ENCODE measurements at regions of chr2 and their contacts with region 1.

Region 1: GRCh38 chr2:33275689-33276444 is 200.6 kb upstream of the RASGRP3 start:
- DNase-seq: no peak
- H3K4me3 ChIP-seq: no peak overlapping the region
- H3K27ac ChIP-seq: peak overlapping the region; percentile 80
- H3K4me1 ChIP-seq: peaks cover 10% of the 10 kb centered on the region
- H3K27me3 ChIP-seq: no peaks in the 10 kb centered on the region
- CTCF ChIP-seq: no peak
- POLR2A ChIP-seq: no peak

Region 2: DNA sequence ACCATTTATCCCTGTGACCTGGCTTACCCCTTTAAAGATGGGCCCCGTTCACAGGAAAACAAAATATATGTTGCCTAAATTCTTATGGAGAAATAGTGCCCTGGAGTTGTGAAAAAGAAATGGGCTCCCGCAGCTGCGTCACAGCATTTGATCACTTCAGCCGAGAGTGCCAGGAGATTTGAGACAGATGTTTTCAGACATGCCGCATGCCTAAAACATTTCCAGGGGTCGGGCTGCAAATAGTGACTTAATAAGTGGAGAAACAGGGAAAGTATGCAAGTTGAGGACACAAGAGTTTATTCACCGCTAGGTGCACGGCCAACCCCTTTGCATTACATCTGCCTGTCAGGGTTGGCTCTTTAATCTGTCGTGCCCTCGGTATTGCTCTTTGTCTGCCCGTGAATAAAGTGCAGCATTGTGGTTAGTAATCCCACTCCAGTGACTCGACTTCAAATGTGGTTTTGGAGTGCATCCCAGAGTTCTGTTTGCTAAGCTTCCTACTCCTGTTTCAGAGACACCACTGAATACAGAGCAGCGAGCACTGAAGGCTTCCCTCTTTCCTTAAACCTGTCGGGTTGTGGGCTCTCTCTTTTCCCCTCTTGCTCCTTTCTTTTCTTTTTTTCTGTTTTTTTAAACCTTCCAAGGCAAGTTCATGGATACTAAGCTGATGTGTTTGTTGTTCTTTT is 141.6 kb before region 1 on chr2:
- intact Hi-C with region 1: loop called (anchors 10 kb)
- DNase-seq: peak in 1 of 2 donors; percentile 91
- H3K4me3 ChIP-seq: peak overlapping the region; percentile 32 to 48
- H3K27ac ChIP-seq: peak overlapping the region; percentile 77
- H3K4me1 ChIP-seq: peaks cover 41% of the 10 kb centered on the region
- H3K27me3 ChIP-seq: no peaks in the 10 kb centered on the region
- CTCF ChIP-seq: no peak
- POLR2A ChIP-seq: peak in 1 of 2 donors; percentile 40

Region 3: DNA sequence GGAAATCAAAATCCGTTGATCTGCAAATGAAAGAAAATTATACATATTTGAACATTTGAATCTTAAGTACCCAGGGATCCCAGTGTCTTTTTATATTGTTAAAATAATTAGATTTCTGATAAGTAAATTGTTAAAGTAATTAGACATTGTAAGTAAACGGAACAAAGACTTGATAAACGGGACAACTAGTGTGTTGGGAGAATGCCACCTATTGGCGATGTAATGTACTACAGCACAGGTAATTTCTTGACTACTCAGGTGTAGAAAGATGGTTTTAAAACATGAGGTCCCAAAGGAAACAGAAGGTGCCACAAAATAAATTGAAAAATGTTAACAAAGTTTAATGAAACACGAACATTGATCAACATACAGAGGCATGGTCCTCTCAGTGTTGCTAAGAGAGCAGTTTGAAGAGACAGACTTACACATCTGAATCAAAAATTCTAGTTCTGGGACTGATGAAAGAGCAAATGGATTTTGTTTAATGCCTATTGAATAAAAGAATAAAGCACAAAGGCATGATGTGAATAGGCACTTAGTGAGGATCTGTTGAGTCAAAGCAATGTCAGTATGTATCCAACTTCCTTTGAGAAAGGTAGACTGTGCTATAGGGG is 97.2 kb after region 1 on chr2:
- intact Hi-C with region 1: loop called (anchors 10 kb)
- DNase-seq: no peak
- H3K4me3 ChIP-seq: no peak overlapping the region
- H3K27ac ChIP-seq: no peak overlapping the region
- H3K4me1 ChIP-seq: no peaks in the 10 kb centered on the region
- H3K27me3 ChIP-seq: no peaks in the 10 kb centered on the region
- CTCF ChIP-seq: peak; percentile 29 to 68 (median 53)
- POLR2A ChIP-seq: no peak